Endothelial cell of umbilical vein (primary cell): ENCODE measurements at regions of chr4 and their contacts with region 1.

Region 1: DNA sequence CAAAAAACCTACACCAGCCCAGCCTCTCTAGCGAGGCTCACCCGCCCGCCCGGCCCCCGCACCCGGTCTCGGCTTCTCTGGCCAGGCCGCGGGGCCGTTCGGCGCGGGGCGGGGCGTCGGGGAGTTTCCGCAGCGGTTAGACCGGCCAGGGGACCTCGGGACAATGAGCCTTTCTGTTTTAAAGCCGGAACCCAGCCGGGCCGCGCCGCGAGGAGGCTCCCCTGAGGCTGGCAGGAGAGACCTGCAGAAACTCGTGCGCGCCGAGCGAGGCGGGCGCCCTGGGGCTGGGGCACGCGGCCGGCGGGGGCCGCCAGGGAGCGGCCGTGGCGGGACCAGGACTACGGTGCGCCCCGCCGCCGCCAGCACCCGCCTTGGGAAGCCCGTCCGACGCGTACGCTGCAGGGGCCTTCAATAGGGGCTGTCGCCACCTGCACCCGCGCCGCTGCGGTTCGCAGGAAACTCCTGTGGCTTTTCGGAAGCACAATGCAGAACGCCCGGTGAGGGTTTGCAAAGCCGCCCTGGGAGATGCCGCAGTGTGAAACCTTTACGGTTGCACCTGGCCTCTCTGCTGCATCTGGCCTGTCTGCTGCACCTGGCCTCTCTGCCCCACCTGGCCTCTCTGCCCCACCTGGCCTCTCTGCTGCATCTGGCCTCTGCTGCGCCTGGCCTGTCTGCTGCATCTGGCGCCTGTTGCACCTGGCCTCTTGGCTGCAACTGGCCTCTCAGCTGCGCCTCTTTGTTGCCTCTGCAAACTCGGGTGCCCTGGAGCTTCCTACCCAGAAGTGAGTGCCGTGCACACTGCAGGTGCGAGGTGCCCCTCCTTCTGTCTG is 63.9 kb downstream of the TRAPPC11 start:
- DNase-seq: peak; percentile 33
- H3K4me3 ChIP-seq: peak overlapping the region; percentile 34 to 44 (median 35)
- H3K27ac ChIP-seq: no peak overlapping the region
- H3K4me1 ChIP-seq: peaks cover 2% of the 10 kb centered on the region
- H3K27me3 ChIP-seq: no peaks in the 10 kb centered on the region
- CTCF ChIP-seq: no peak
- POLR2A ChIP-seq: no peak

Region 2: DNA sequence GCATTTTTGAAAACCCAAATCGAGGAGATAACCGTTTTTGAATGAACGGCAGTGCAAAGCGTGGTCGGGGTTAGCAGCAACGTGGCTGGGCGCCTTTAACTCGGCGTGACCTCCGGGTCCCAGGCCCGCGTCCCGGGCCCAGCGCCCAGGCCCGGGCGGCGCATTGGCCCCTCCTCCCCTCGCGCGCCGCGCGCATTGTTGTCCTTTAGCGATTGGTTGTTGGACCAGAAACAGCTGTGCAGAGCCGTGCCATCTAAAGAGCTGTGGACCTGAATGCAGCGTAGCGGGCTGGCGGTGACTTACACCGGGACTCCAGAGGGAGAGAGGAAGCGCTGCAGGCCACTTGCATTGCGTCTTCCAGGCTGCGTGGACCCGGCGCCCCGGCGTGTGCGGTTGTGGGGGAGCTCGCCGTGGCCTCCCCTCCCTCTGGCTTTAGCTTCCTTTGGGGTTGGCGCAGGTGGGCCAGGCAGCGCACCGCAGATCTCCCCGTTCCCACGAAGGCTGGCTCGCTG is 182.2 kb after region 1 on chr4 and contains the start of gene STOX2:
- CTCF ChIA-PET with region 1: no interaction called
- POLR2A ChIA-PET with region 1: no interaction called
- dilution Hi-C with region 1: no loop called
- intact Hi-C with region 1: loop called (anchors 5 kb)
- DNase-seq: peak; percentile 49
- H3K4me3 ChIP-seq: peak within 1 kb of the TSS in 2 of 3 experiments; percentile 40 to 43
- H3K27ac ChIP-seq: no peak within 1 kb of the TSS
- H3K4me1 ChIP-seq: no peaks in the 10 kb centered on the region
- H3K27me3 ChIP-seq: peaks cover 19 to 23% of the 10 kb centered on the region in 2 experiments
- CTCF ChIP-seq: no peak
- POLR2A ChIP-seq: no peak
- total RNA-seq, gene STOX2: 0.02 and 0.24 TPM in 2 replicates

Region 3: GRCh38 chr4:184168406-184169019 is 445.6 kb after region 1 on chr4:
- CTCF ChIA-PET with region 1: interaction called, 6 read pairs
- POLR2A ChIA-PET with region 1: no interaction called
- dilution Hi-C with region 1: no loop called
- intact Hi-C with region 1: loop called (anchors 10 kb)
- DNase-seq: peak; percentile 53
- H3K4me3 ChIP-seq: no peak overlapping the region
- H3K27ac ChIP-seq: no peak overlapping the region
- H3K4me1 ChIP-seq: no peaks in the 10 kb centered on the region
- H3K27me3 ChIP-seq: peaks cover 0 to 3% of the 10 kb centered on the region in 2 experiments
- CTCF ChIP-seq: peak; percentile 90 to 99
- POLR2A ChIP-seq: no peak